ENCODE measurements at regions of chr12 and their contacts with region 1.

Region 1: GRCh38 chr12:57268264-57268663 is 17.3 kb upstream of the STAC3 start:
- DNase-seq: peak; percentile 51
- H3K4me3 Mint-ChIP-seq: no peak overlapping the region
- H3K27ac Mint-ChIP-seq: peak overlapping the region; percentile 80
- H3K4me1 Mint-ChIP-seq: peaks cover 7% of the 10 kb centered on the region
- H3K27me3 Mint-ChIP-seq: no peaks in the 10 kb centered on the region

Region 2: DNA sequence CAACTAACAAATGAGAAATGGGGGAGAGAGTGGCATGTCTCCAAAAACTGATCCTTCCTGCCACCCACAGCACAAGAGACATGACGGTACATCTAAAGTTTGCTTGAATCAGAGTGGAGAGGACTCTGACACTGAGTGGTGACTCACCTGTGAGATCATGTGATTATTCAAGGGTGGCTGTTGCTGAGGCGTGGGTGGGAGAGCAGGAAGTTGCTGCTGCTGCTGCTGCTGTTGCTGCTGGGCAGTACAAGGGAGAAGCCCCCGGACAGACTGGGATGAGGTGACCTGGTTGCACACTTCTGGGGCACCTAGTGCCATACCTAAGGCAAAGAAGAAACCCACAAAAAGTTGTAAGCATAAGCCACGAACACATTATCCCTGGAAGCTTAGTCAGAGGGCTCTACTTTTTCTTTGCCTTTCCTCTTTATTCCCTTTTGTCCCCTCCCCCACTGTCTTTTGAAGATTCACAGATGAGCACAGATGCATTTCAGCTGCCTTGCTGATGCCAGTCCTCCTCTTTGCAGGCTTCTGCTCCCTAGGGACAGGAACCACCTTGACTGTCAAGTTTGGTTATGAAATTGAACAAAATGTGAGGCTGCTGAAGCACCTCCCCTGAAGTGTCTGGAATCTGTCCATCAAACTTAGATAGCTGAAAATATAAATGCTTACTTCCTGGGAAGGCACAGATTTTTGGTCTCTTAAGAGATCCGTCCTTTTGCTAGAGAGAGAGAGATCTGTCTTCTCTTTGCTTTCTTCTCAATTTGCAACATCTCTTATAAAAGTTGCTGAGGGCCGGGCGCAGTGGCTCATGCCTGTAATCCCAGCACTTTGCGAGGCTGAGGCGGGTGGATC is 12.2 kb after region 1 on chr12:
- CTCF ChIA-PET with region 1: interaction called, 14 read pairs
- intact Hi-C with region 1: no loop called
- DNase-seq: peak; percentile 90
- H3K4me3 Mint-ChIP-seq: peak overlapping the region; percentile 46
- H3K27ac Mint-ChIP-seq: peak overlapping the region; percentile 90
- H3K4me1 Mint-ChIP-seq: peaks cover 28% of the 10 kb centered on the region
- H3K27me3 Mint-ChIP-seq: no peaks in the 10 kb centered on the region